PC-9 (cell line): ENCODE measurements at regions of chr3 and their contacts with region 1.

Region 1: DNA sequence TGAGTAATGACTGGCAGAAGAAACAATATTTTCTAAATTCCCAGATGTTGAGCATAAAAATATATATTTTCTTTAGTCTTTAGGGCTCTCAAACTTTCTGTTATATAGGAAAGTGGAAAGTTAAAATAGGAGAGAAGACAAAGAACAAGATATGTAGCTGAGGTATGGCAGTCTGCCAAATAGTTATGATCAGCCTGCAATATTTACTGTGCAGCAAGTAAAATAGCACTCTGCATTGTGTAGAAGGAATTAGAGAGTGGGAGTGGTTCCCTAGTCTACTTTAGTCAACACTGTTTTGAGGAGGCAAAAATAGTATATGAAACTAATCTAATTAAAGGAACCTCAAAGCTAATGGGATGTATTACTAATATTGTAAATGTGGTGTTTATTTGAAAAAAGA is 978.1 kb upstream of the ALCAM start:
- DNase-seq: no peak
- H3K4me3 ChIP-seq: no peak overlapping the region
- H3K27ac ChIP-seq: no peak overlapping the region
- H3K4me1 ChIP-seq: no peaks in the 10 kb centered on the region
- H3K27me3 ChIP-seq: no peaks in the 10 kb centered on the region
- CTCF ChIP-seq: no peak

Region 2: DNA sequence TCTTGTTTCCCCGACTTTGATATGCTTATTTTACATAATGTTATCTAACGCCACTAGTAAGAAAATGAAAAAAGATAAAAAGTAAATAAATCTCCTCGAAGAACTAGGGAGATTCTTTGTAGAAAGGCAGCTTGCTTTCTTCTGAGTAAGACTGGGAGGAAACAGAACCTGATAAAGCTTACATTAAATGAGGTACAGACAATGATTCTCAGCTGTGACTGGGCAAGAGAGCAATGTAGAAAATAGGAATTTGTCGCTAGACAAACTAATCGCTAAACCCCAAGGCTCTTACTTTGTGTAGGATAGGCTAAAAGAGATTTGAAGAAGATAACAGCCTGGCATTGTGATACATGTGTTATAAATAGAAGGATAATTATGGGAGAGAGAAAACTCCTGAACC is 59.1 kb after region 1 on chr3:
- CTCF ChIA-PET with region 1: no interaction called
- POLR2A ChIA-PET with region 1: no interaction called
- intact Hi-C with region 1: loop called (anchors 10 kb)
- DNase-seq: no peak
- H3K4me3 ChIP-seq: no peak overlapping the region
- H3K27ac ChIP-seq: no peak overlapping the region
- H3K4me1 ChIP-seq: no peaks in the 10 kb centered on the region; the same call in 1 of the 2 replicates
- H3K27me3 ChIP-seq: no peaks in the 10 kb centered on the region
- CTCF ChIP-seq: no peak

Region 3: GRCh38 chr3:105518806-105519418 is 1130.3 kb after region 1 on chr3:
- CTCF ChIA-PET with region 1: no interaction called
- POLR2A ChIA-PET with region 1: no interaction called
- intact Hi-C with region 1: no loop called
- DNase-seq: peak; percentile 22 to 57
- H3K4me3 ChIP-seq: no peak overlapping the region
- H3K27ac ChIP-seq: no peak overlapping the region
- H3K4me1 ChIP-seq: peaks cover 8% of the 10 kb centered on the region
- H3K27me3 ChIP-seq: no peaks in the 10 kb centered on the region
- CTCF ChIP-seq: peak; percentile 95